ENCODE measurements at regions of chr2 and their contacts with region 1.

Region 1: GRCh38 chr2:84865181-84865783 is 15.6 kb downstream of the TRABD2A start:
- DNase-seq: peak in 2 of 5 donors; percentile 50 to 58
- H3K4me3 ChIP-seq: no peak overlapping the region
- H3K4me3 Mint-ChIP-seq: peak overlapping the region in 2 of 7 donors; percentile 8 to 66
- H3K27ac ChIP-seq: no peak overlapping the region
- H3K27ac Mint-ChIP-seq: peak overlapping the region; percentile 41 to 88 (median 70)
- H3K4me1 ChIP-seq: peaks cover 72% of the 10 kb centered on the region
- H3K4me1 Mint-ChIP-seq: peaks cover 54 to 82% (median 63%) of the 10 kb centered on the region in 3 donors
- H3K27me3 ChIP-seq: no peaks in the 10 kb centered on the region
- H3K27me3 Mint-ChIP-seq: no peaks in the 10 kb centered on the region

Region 2: GRCh38 chr2:84807063-84807830 is 58.0 kb before region 1 on chr2:
- CTCF ChIA-PET with region 1: no interaction called
- POLR2A ChIA-PET with region 1: no interaction called
- DNase-seq: no peak
- H3K4me3 ChIP-seq: no peak overlapping the region
- H3K4me3 Mint-ChIP-seq: no peak overlapping the region
- H3K27ac ChIP-seq: no peak overlapping the region
- H3K27ac Mint-ChIP-seq: peak overlapping the region in 3 of 8 donors; percentile 28 to 64 (median 32)
- H3K4me1 ChIP-seq: no peaks in the 10 kb centered on the region
- H3K4me1 Mint-ChIP-seq: peaks cover 4 to 29% (median 24%) of the 10 kb centered on the region in 3 donors
- H3K27me3 ChIP-seq: no peaks in the 10 kb centered on the region
- H3K27me3 Mint-ChIP-seq: no peaks in the 10 kb centered on the region

Region 3: GRCh38 chr2:84846041-84846663 is 19.1 kb before region 1 on chr2:
- CTCF ChIA-PET with region 1: interaction called, 10 read pairs
- POLR2A ChIA-PET with region 1: no interaction called
- DNase-seq: peak in 3 of 5 donors; percentile 62 to 85 (median 75)
- H3K4me3 ChIP-seq: peak overlapping the region; percentile 40
- H3K4me3 Mint-ChIP-seq: peak overlapping the region; percentile 25 to 83 (median 69)
- H3K27ac ChIP-seq: peak overlapping the region; percentile 12
- H3K27ac Mint-ChIP-seq: peak overlapping the region; percentile 85 to 98 (median 94)
- H3K4me1 ChIP-seq: peaks cover 96% of the 10 kb centered on the region
- H3K4me1 Mint-ChIP-seq: peaks cover 86 to 96% (median 95%) of the 10 kb centered on the region in 3 donors
- H3K27me3 ChIP-seq: no peaks in the 10 kb centered on the region
- H3K27me3 Mint-ChIP-seq: no peaks in the 10 kb centered on the region

Measured in CD8-positive, alpha-beta memory T cell (primary cell).